ENCODE measurements at regions of chr15 and their contacts with region 1.

Region 1: GRCh38 chr15:73991726-73992593 is at the start of gene STOML1:
- DNase-seq: peak; percentile 95
- ATAC-seq: peak; percentile 77
- H3K4me3 ChIP-seq: peak within 1 kb of the TSS; percentile 17 to 85 (median 62)
- H3K4me3 Mint-ChIP-seq: peak within 1 kb of the TSS; percentile 79
- H3K27ac ChIP-seq: peak within 1 kb of the TSS; percentile 50 to 67
- H3K27ac Mint-ChIP-seq: peak within 1 kb of the TSS; percentile 65
- H3K4me1 ChIP-seq: peaks cover 45 to 60% of the 10 kb centered on the region in 2 donors
- H3K4me1 Mint-ChIP-seq: peaks cover 54% of the 10 kb centered on the region
- H3K27me3 ChIP-seq: no peaks in the 10 kb centered on the region
- H3K27me3 Mint-ChIP-seq: no peaks in the 10 kb centered on the region
- CTCF ChIP-seq: peak; percentile 94
- total RNA-seq, gene STOML1: 6.2 and 8.3 TPM in 2 replicates

Region 2: GRCh38 chr15:73972984-73973682 is 18.8 kb before region 1 on chr15:
- CTCF ChIA-PET with region 1: interaction called, 24 read pairs
- POLR2A ChIA-PET with region 1: no interaction called
- intact Hi-C with region 1: loop called (anchors 1 kb)
- DNase-seq: peak; percentile 86
- ATAC-seq: peak; percentile 81
- H3K4me3 ChIP-seq: peak overlapping the region in 4 of 5 experiments; percentile 6 to 55 (median 26)
- H3K4me3 Mint-ChIP-seq: peak overlapping the region; percentile 42
- H3K27ac ChIP-seq: no peak overlapping the region
- H3K27ac Mint-ChIP-seq: no peak overlapping the region
- H3K4me1 ChIP-seq: peaks cover 16 to 17% of the 10 kb centered on the region in 2 donors
- H3K4me1 Mint-ChIP-seq: peaks cover 20% of the 10 kb centered on the region
- H3K27me3 ChIP-seq: peaks cover 0 to 20% (median 13%) of the 10 kb centered on the region in 4 experiments
- H3K27me3 Mint-ChIP-seq: peaks cover 23% of the 10 kb centered on the region
- CTCF ChIP-seq: peak; percentile 82

Region 3: GRCh38 chr15:74053941-74054529 is 62.1 kb after region 1 on chr15:
- CTCF ChIA-PET with region 1: interaction called, 15 read pairs
- POLR2A ChIA-PET with region 1: no interaction called
- intact Hi-C with region 1: no loop called
- DNase-seq: peak; percentile 75
- ATAC-seq: peak; percentile 98
- H3K4me3 ChIP-seq: no peak overlapping the region
- H3K4me3 Mint-ChIP-seq: peak overlapping the region; percentile 59
- H3K27ac ChIP-seq: no peak overlapping the region
- H3K27ac Mint-ChIP-seq: no peak overlapping the region
- H3K4me1 ChIP-seq: peaks cover 6 to 7% of the 10 kb centered on the region in 2 donors
- H3K4me1 Mint-ChIP-seq: peaks cover 9% of the 10 kb centered on the region
- H3K27me3 ChIP-seq: no peaks in the 10 kb centered on the region
- H3K27me3 Mint-ChIP-seq: no peaks in the 10 kb centered on the region
- CTCF ChIP-seq: peak; percentile 37

Region 4: DNA sequence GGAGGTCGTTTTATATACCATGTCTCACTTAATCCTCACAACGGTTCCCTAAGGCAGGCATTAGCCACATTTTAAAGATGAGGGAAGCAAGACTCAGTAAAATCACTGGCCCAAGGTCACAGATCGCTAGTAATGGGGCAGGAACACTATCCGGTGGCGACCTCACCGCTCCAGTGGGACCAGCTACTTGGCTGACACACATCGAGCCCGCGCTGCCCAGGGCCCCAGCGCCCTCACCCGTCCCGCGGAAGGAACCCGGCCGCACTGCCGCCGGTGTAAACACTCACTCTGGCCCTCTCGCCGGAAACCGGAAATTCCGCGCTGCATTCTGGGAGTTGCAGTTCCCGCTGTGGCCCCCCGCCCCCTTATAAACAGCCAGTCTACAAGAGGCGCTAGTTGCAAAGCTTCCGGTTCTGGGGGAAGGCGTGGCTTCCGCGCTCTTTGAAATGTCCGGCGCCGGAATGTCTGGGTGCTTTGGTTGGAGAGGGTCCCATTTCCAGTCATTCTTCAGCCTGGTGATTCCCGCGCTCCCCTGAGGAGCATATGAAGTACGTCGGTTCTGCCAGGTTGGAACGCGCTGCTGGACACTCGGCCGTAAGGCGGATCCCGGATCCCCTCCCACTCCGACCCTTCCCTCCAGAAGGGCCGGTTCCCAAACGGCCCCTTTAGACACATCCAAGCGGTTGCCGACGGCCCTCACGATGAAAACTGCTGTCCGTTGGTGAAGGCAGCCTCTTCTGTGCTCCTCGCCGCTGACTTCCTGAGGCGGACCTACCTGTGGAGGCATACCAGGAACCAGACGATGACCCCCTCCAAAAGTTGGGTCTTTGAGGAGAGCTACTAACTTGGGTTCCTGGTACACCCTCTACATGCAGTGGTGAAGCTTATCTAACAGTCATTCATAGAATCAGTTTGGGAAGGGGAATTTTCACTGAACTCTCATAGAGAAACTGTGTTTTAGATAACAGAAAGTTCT is 469.2 kb after region 1 on chr15 and contains the start of gene UBL7:
- CTCF ChIA-PET with region 1: no interaction called
- POLR2A ChIA-PET with region 1: no interaction called
- intact Hi-C with region 1: loop called (anchors 5 kb)
- DNase-seq: peak; percentile 96
- ATAC-seq: peak; percentile 95
- H3K4me3 ChIP-seq: peak within 1 kb of the TSS; percentile 78 to 99 (median 90)
- H3K4me3 Mint-ChIP-seq: peak within 1 kb of the TSS; percentile 92
- H3K27ac ChIP-seq: peak within 1 kb of the TSS; percentile 77 to 80
- H3K27ac Mint-ChIP-seq: peak within 1 kb of the TSS; percentile 76
- H3K4me1 ChIP-seq: peaks cover 30 to 40% of the 10 kb centered on the region in 2 donors
- H3K4me1 Mint-ChIP-seq: peaks cover 39% of the 10 kb centered on the region
- H3K27me3 ChIP-seq: no peaks in the 10 kb centered on the region
- H3K27me3 Mint-ChIP-seq: no peaks in the 10 kb centered on the region
- CTCF ChIP-seq: no peak
- total RNA-seq, gene UBL7: 44.4 and 50.1 TPM in 2 replicates

Region 5: GRCh38 chr15:74781431-74782258 is 789.7 kb after region 1 on chr15 and contains the start of gene CSK:
- CTCF ChIA-PET with region 1: no interaction called
- POLR2A ChIA-PET with region 1: no interaction called
- intact Hi-C with region 1: loop called (anchors 5 kb)
- DNase-seq: peak; percentile 91
- ATAC-seq: peak; percentile 53
- H3K4me3 ChIP-seq: peak within 1 kb of the TSS; percentile 86 to 99 (median 93)
- H3K4me3 Mint-ChIP-seq: peak within 1 kb of the TSS; percentile 93
- H3K27ac ChIP-seq: peak within 1 kb of the TSS; percentile 91 to 99
- H3K27ac Mint-ChIP-seq: peak within 1 kb of the TSS; percentile 98
- H3K4me1 ChIP-seq: peaks cover 67 to 84% of the 10 kb centered on the region in 2 donors
- H3K4me1 Mint-ChIP-seq: peaks cover 85% of the 10 kb centered on the region
- H3K27me3 ChIP-seq: no peaks in the 10 kb centered on the region
- H3K27me3 Mint-ChIP-seq: no peaks in the 10 kb centered on the region
- CTCF ChIP-seq: peak; percentile 59
- total RNA-seq, gene CSK: 325 and 343 TPM in 2 replicates

Region 6: DNA sequence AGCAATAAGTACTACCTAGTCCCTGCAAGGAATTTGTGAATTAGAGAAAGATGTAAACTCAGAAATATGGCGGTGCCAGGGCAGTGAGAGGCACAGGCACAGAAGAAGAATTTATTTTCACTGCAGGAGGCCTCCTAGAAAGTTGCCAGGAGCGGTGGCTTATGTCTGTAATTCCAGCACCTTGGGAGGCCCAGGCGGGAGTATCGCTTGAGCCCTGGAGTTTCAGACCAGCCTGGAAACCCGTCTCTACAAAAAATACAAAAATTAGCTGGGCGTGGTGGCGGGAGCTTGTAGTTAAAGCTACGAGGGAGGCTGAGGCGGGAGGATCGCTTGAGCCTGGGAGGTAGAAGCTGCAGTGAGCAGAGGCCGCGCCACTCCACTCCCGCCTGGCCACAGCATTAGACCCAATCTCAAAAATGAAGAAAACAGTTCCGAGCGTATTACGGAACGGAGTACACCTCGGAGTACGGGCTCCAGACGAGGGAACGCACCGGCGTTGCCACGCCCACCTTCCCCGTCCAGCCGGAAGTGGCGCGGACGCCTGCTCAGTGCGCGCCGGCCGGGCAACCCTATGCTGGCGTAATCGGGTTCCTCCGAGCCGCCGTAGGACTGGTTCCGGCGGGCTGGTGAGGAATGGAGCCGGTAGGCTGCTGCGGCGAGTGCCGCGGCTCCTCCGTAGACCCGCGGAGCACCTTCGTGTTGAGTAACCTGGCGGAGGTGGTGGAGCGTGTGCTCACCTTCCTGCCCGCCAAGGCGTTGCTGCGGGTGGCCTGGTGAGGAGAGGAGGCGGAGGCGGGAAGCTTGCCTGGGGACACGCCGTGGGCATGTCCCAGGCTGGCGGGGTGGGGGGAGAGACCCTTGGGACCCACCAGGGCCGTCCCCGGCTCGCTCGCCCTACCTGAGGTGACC is 1911.6 kb after region 1 on chr15 and contains the start of gene FBXO22:
- CTCF ChIA-PET with region 1: no interaction called
- POLR2A ChIA-PET with region 1: no interaction called
- intact Hi-C with region 1: loop called (anchors 5 kb)
- DNase-seq: peak; percentile 93
- ATAC-seq: peak; percentile 97
- H3K4me3 ChIP-seq: peak within 1 kb of the TSS; percentile 78 to 97 (median 90)
- H3K4me3 Mint-ChIP-seq: peak within 1 kb of the TSS; percentile 100
- H3K27ac ChIP-seq: peak within 1 kb of the TSS; percentile 80 to 93
- H3K27ac Mint-ChIP-seq: peak within 1 kb of the TSS; percentile 97
- H3K4me1 ChIP-seq: peaks cover 12 to 13% of the 10 kb centered on the region in 2 donors
- H3K4me1 Mint-ChIP-seq: peaks cover 33% of the 10 kb centered on the region
- H3K27me3 ChIP-seq: no peaks in the 10 kb centered on the region
- H3K27me3 Mint-ChIP-seq: no peaks in the 10 kb centered on the region
- CTCF ChIP-seq: no peak
- total RNA-seq, gene FBXO22: 23.3 and 24.1 TPM in 2 replicates